Activated T-helper 1 cell treated with anti-CD3 and anti-CD28 coated beads, Interleukin-12 subunit alpha, Interleukin-12 subunit beta, Interleukin-2, Interleukin-4 antibody, amounts not matched to agents 30 ng/mL and 10 ng/mL and 1 ng/mL, durations not matched to agents 14 hours and 24 hours and 36 hours (primary cell): ENCODE measurements at regions of chr14 and their contacts with region 1.

Region 1: GRCh38 chr14:67619446-67620216 is at the start of gene ARG2:
- DNase-seq: peak; percentile 94
- H3K4me3 Mint-ChIP-seq: peak within 1 kb of the TSS; percentile 86
- H3K27ac Mint-ChIP-seq: peak within 1 kb of the TSS; percentile 71
- H3K4me1 Mint-ChIP-seq: peaks cover 39% of the 10 kb centered on the region
- H3K27me3 Mint-ChIP-seq: peaks cover 14% of the 10 kb centered on the region
- total RNA-seq, gene ARG2: 5.2 and 7.1 TPM in 2 replicates

Region 2: GRCh38 chr14:67674481-67675169 is 55.0 kb after region 1 on chr14 and contains the start of gene VTI1B:
- intact Hi-C with region 1: loop called (anchors 2 kb)
- DNase-seq: peak; percentile 70
- H3K4me3 Mint-ChIP-seq: peak within 1 kb of the TSS; percentile 90
- H3K27ac Mint-ChIP-seq: peak within 1 kb of the TSS; percentile 87
- H3K4me1 Mint-ChIP-seq: peaks cover 41% of the 10 kb centered on the region
- H3K27me3 Mint-ChIP-seq: no peaks in the 10 kb centered on the region
- total RNA-seq, gene VTI1B: 77.7 and 77.8 TPM in 2 replicates